ENCODE measurements at regions of chr3 and their contacts with region 1.

Region 1: DNA sequence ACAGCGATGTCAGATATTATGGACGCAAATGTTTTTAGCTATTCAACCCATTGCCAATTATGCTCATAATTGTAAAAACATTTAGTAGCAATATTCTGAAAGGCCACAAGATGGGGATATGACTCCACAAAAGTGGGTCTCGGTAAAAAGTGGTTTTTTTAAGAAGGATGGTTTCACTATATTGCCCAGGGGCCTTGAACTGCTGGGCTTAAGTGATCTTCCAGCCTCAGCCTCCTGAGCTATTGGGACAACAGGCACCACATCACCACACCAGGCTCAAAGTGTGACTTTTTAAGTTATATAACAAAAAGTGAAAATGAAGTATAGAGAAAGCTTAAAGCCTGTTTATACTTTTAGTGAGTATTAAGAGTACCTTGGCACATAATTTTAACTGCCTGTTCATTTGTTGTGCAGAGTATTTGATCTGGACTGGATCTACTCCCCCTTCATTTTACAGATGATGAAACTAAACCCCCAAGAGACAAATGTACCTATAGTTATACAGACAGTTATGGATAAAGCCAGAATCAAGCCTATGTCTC is 9.4 kb downstream of the NAA50 start:
- DNase-seq: peak; percentile 43
- H3K4me3 ChIP-seq: no peak overlapping the region
- H3K27ac ChIP-seq: no peak overlapping the region
- H3K27me3 ChIP-seq: no peaks in the 10 kb centered on the region
- CTCF ChIP-seq: peak; percentile 64

Region 2: DNA sequence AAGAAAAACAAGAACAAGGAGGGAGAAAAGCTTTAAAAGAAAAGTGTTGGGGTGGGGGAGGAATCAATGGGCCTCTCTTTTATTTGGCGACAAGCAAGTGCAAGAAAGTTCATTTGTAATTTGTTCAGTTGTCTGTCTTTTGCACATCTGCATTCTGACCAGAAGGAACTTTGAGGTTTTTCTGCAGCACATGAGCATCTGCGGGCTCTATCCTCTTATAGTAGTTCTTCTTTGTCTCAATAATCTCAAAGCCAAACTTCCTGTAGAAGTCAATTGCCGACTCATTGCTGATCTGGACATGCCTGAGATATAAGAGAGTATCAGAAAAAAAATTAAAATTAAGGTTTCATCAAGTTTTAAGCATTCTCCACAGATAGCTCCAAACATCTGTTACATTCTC is 15.0 kb before region 1 on chr3:
- CTCF ChIA-PET with region 1: interaction called, 23 read pairs
- POLR2A ChIA-PET with region 1: no interaction called
- DNase-seq: no peak
- H3K4me3 ChIP-seq: no peak overlapping the region
- H3K27ac ChIP-seq: no peak overlapping the region
- H3K27me3 ChIP-seq: no peaks in the 10 kb centered on the region
- CTCF ChIP-seq: no peak

Region 3: GRCh38 chr3:113838631-113839209 is 102.1 kb after region 1 on chr3 and contains the start of gene GRAMD1C:
- CTCF ChIA-PET with region 1: interaction called, 40 read pairs
- POLR2A ChIA-PET with region 1: no interaction called
- DNase-seq: peak; percentile 74
- H3K4me3 ChIP-seq: peak within 1 kb of the TSS; percentile 77
- H3K27ac ChIP-seq: no peak within 1 kb of the TSS
- H3K27me3 ChIP-seq: no peaks in the 10 kb centered on the region
- CTCF ChIP-seq: peak; percentile 86
- polyA plus RNA-seq, gene GRAMD1C: 3.0 and 4.2 TPM in 2 replicates

Region 4: GRCh38 chr3:113912552-113913236 is 176.1 kb after region 1 on chr3:
- CTCF ChIA-PET with region 1: interaction called, 26 read pairs
- POLR2A ChIA-PET with region 1: no interaction called
- DNase-seq: peak; percentile 32
- H3K4me3 ChIP-seq: no peak overlapping the region
- H3K27ac ChIP-seq: no peak overlapping the region
- H3K27me3 ChIP-seq: no peaks in the 10 kb centered on the region
- CTCF ChIP-seq: peak; percentile 76